WTC11 (cell line): ENCODE measurements at regions of chr18 and their contacts with region 1.

Region 1: GRCh38 chr18:56995579-56996188 is 151.2 kb upstream of the BOD1L2 start:
- DNase-seq: no peak
- ATAC-seq: peak; percentile 88
- H3K4me3 Mint-ChIP-seq: no peak overlapping the region
- H3K27ac Mint-ChIP-seq: no peak overlapping the region; the same call in 1 of the 2 replicates
- H3K4me1 Mint-ChIP-seq: peaks cover 5% of the 10 kb centered on the region
- H3K27me3 Mint-ChIP-seq: no peaks in the 10 kb centered on the region
- CTCF ChIP-seq: no peak

Region 2: DNA sequence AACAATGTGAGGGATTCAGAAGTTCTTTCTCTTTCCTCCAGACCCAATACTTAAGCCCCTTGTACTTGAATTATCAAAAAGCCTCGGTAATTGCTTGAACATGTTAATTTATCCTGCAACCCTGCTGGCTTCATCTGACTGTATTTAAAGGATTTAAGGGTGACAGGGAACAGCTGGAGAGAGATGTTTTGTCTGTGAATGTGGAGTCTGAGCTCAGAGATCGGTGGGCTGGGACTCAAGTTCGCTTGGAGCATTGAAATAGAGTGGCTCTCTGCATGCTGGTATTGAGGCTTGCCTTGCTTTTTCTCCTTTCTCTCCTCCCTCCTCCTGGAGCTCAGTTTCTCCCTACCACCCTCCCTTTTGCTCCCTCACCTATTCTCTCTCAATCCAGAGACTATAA is 224.8 kb after region 1 on chr18:
- CTCF ChIA-PET with region 1: no interaction called
- POLR2A ChIA-PET with region 1: interaction called, 10 read pairs
- DNase-seq: no peak
- ATAC-seq: peak; percentile 81
- H3K4me3 Mint-ChIP-seq: peak overlapping the region; percentile 16
- H3K27ac Mint-ChIP-seq: peak overlapping the region; percentile 37; the same call in 1 of the 2 replicates
- H3K4me1 Mint-ChIP-seq: peaks cover 31% of the 10 kb centered on the region
- H3K27me3 Mint-ChIP-seq: no peaks in the 10 kb centered on the region; the same call in 1 of the 2 replicates
- CTCF ChIP-seq: no peak